Colonic mucosa (tissue), 4 donors: ENCODE measurements at regions of chr15 and their contacts with region 1.

Region 1: DNA sequence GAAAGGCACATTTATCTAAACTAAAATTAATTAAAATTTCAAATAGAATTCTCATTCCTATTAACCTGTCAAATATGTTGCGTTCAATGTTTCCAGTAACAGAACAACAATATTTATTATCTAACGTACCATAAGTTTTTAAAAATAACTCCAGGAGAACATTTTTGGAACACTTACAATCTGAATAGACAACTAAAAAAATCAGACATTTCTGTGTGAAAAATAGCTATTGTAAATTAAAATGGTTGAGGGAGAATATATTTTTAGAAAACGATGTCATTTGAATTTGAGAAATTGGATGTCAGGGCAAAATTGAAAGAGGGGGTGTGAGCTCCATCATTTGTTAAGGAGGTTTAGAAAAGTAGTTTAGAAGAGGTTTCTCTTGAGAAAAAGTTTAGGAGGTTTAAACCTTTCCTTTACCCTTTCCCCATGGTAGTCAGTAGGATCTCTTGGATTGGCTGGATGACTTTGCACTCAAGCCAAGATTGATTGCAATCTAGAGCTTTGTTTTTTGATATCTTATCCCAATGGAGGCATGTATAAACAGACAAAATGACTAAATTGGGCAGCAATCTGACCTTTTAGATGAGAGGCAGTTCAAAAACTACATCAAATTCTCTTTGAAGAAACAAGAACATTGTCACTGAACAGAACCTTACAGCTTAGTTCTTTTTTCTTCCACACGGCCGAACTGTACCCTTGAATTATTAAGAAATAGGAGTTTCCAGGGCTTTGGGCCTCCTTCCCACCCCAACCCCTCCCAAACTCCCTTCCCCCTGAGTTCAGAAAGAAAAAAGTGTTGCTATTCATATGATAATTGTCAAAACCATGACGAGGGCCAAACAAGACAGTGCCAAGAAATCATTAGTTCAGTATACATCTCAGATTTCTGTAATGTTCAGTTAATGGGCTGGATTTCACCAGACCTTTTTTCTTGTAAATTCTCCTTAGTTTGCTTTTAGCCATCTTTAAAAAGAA is 79.7 kb upstream of the CDIN1 start:
- DNase-seq: no peak
- H3K4me3 ChIP-seq: no peak overlapping the region
- H3K27ac ChIP-seq: no peak overlapping the region
- H3K4me1 ChIP-seq: no peaks in the 10 kb centered on the region
- H3K27me3 ChIP-seq: no peaks in the 10 kb centered on the region
- CTCF ChIP-seq: no peak

Region 2: GRCh38 chr15:36722555-36722954 is 222.9 kb after region 1 on chr15:
- intact Hi-C with region 1: no loop called
- DNase-seq: no peak
- H3K4me3 ChIP-seq: no peak overlapping the region
- H3K27ac ChIP-seq: no peak overlapping the region
- H3K4me1 ChIP-seq: no peaks in the 10 kb centered on the region
- H3K27me3 ChIP-seq: no peaks in the 10 kb centered on the region
- CTCF ChIP-seq: no peak

Region 3: DNA sequence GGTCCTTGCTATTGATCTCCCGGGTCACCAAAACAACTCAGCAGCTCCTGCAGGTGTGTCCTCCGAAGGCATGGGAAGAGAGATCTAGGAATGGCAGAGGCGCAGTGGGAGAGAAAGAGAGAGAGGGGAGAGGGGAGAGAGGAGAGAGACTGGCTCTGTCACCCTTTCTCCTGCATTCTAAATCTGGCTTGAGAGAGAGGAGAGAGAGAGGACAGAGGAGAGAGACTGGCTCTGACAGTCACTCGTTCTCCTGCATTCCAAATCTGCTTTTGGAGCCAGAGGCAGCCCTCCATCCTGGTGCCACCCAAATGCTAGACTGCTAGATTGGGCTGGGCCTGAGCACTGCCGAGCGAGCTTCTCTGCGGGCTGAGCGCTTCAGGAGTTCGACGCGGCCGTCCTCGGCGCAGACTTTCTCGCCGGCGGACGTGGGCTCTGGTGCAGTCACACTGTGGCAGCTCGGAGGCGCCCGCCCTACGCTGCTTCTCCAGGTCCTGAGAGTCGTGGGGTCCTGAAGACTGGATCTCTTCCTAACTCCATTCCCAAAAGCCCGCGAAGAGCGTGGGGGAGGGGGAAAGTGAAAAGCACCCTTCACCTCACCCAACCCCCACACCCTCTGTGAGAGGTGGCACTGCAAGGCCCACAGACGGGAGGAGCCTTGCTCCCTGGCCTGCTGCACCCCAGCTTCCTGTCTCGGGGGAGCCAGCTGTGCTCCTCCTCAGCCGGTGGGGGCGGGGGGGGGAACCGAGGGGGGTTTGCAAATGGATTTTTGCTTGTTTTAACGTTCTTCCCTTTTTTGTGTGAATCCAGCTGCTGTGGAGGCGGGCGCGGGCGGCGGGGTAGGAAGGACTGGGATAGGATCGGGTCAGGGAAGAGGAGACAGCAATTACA is 378.3 kb after region 1 on chr15:
- intact Hi-C with region 1: loop called (anchors 10 kb)
- DNase-seq: no peak
- H3K4me3 ChIP-seq: no peak overlapping the region
- H3K27ac ChIP-seq: no peak overlapping the region
- H3K4me1 ChIP-seq: no peaks in the 10 kb centered on the region
- H3K27me3 ChIP-seq: peaks cover 46% of the 10 kb centered on the region
- CTCF ChIP-seq: no peak

Region 4: GRCh38 chr15:37134699-37135131 is 635.0 kb after region 1 on chr15:
- intact Hi-C with region 1: loop called (anchors 10 kb)
- DNase-seq: no peak
- H3K4me3 ChIP-seq: no peak overlapping the region
- H3K27ac ChIP-seq: no peak overlapping the region
- H3K4me1 ChIP-seq: no peaks in the 10 kb centered on the region
- H3K27me3 ChIP-seq: no peaks in the 10 kb centered on the region
- CTCF ChIP-seq: peak; percentile 61